Prostate gland (tissue), 2 donors: ENCODE measurements at regions of chr18 and their contacts with region 1.

Region 1: DNA sequence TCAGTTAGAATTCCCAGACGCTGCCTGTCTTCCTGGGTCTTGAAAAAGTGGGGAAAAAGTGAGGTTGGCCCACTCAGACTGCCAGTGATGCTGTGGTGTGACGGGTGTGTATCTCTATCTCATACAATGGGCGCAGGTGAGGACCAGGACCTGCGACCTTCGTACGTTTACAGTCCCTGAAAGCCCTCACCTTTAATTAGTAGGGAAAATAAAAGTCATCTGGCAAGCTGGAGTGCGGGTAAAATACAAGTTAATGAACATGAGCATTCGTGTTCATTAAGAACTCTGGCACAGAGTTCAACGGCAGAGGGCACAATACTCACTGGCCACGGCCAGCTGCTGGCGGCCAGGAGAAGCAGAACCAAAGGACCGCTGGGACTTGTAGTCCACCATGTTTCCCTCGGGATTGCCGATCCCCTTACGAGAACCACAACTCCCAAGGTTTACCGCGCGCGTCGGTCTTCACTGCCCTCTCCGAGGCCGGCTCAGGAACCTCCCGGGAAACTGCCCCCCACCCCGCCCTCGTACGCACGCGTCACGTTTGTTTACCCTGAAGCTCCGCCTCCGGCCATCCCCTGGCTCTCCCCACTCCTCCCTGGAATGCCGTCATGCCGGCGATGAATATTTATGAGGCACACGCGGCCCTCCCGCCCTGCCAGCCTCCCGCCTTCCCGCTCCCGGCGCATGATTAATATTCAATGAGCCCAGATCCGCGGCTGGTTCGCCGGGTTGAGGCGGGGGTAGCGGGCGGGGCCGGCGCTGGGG is 488 bp upstream of the PHLPP1 start:
- DNase-seq: peak; percentile 100
- H3K4me3 ChIP-seq: peak overlapping the region; percentile 70 to 71
- H3K27ac ChIP-seq: peak overlapping the region; percentile 97
- H3K4me1 ChIP-seq: no peaks in the 10 kb centered on the region
- H3K27me3 ChIP-seq: no peaks in the 10 kb centered on the region
- CTCF ChIP-seq: peak; percentile 46 to 94 (median 86)
- POLR2A ChIP-seq: no peak

Region 2: DNA sequence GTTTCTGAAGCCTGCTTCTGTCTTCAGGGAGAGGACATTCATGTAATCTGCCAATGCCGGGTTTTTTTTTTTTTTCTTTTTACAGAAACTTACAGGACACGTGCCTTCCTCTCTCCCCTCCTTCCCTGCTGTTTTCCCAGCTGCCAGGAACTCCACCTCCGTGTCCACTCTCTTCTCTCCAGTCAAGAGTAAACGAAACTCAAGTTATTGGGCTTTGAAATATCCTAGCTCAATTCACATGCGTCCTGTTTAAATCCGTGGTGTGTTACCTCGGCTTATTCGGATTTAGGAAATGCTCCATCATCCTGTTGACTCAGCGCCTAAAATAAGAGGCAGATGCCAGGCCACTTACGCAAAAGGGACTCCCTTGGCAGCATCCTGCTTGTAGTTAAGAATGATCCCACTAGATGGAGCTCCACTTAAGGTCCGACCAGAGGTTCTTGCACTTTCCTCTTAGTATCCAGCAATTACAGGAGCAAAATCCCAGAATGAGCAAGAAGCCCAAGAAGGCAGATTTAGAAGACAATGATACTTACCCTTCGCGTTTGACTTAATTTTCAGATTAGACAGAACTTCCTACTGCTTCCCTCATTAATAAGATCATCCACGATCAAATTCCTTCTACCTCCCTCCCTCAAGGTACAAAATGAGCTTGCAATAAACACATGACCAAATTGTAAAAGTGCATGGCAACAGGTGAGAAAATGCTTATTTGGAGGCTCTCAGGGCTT is 289.2 kb before region 1 on chr18:
- intact Hi-C with region 1: loop called (anchors 5 kb)
- DNase-seq: peak; percentile 93
- H3K4me3 ChIP-seq: peak overlapping the region; percentile 13 to 19
- H3K27ac ChIP-seq: peak overlapping the region; percentile 72 to 73
- H3K4me1 ChIP-seq: no peaks in the 10 kb centered on the region
- H3K27me3 ChIP-seq: no peaks in the 10 kb centered on the region
- CTCF ChIP-seq: peak; percentile 35 to 93 (median 85)
- POLR2A ChIP-seq: no peak

Region 3: GRCh38 chr18:62584241-62585120 is 130.4 kb before region 1 on chr18:
- intact Hi-C with region 1: loop called (anchors 5 kb)
- DNase-seq: peak; percentile 84
- H3K4me3 ChIP-seq: no peak overlapping the region
- H3K27ac ChIP-seq: no peak overlapping the region
- H3K4me1 ChIP-seq: no peaks in the 10 kb centered on the region
- H3K27me3 ChIP-seq: no peaks in the 10 kb centered on the region
- CTCF ChIP-seq: peak; percentile 87 to 99 (median 98)
- POLR2A ChIP-seq: no peak

Region 4: GRCh38 chr18:62759704-62760402 is 45.0 kb after region 1 on chr18:
- intact Hi-C with region 1: no loop called
- DNase-seq: no peak
- H3K4me3 ChIP-seq: no peak overlapping the region
- H3K27ac ChIP-seq: no peak overlapping the region
- H3K4me1 ChIP-seq: no peaks in the 10 kb centered on the region
- H3K27me3 ChIP-seq: no peaks in the 10 kb centered on the region
- CTCF ChIP-seq: no peak
- POLR2A ChIP-seq: no peak

Region 5: DNA sequence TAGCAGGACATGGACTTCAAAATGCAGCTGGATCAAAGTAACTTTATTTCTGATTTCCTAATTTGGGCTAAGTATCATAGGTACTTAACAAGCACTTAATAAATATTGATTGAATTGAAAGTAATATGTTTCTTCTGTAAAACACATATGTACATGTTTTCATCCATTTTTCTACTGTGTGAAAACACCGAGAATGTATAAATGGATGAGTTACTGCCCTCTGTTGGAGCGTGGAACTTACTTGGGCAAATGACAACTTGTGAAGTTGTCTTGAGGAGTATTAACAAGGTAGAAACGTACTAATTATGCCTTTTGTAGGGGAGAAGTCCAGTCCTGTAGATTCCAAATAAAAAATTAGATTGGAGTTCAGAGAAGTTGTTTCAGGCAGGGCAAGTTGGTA is 87.7 kb after region 1 on chr18:
- intact Hi-C with region 1: loop called (anchors 5 kb)
- DNase-seq: no peak
- H3K4me3 ChIP-seq: no peak overlapping the region
- H3K27ac ChIP-seq: no peak overlapping the region
- H3K4me1 ChIP-seq: no peaks in the 10 kb centered on the region
- H3K27me3 ChIP-seq: no peaks in the 10 kb centered on the region
- CTCF ChIP-seq: peak in 2 of 4 experiments; percentile 22 to 28
- POLR2A ChIP-seq: no peak

Region 6: GRCh38 chr18:62904396-62905285 is 189.8 kb after region 1 on chr18:
- intact Hi-C with region 1: no loop called
- DNase-seq: no peak
- H3K4me3 ChIP-seq: no peak overlapping the region
- H3K27ac ChIP-seq: no peak overlapping the region
- H3K4me1 ChIP-seq: no peaks in the 10 kb centered on the region
- H3K27me3 ChIP-seq: no peaks in the 10 kb centered on the region
- CTCF ChIP-seq: no peak
- POLR2A ChIP-seq: no peak

Region 7: GRCh38 chr18:62925031-62925688 is 210.3 kb after region 1 on chr18:
- intact Hi-C with region 1: no loop called
- DNase-seq: no peak
- H3K4me3 ChIP-seq: no peak overlapping the region
- H3K27ac ChIP-seq: no peak overlapping the region
- H3K4me1 ChIP-seq: no peaks in the 10 kb centered on the region
- H3K27me3 ChIP-seq: no peaks in the 10 kb centered on the region
- CTCF ChIP-seq: no peak
- POLR2A ChIP-seq: no peak

Region 8: DNA sequence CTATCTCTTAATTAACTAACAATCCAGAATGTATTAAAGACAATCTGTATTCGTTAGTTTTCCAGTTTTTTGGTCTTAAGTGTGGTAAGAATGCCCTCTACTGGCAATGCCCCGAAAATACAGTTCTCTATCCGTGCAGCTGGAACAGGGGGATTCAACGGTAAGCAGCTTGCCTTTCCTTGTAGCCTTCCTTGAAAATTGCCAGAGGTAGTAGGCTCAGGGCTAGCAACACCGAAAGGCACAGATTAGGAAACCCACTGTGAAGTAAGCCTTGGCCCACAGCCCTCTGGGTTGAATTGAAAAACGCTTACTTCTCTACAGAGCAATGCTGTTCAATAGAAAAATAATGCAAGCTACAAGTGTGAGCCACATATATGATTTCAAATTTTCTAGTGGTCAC is 724.5 kb after region 1 on chr18:
- intact Hi-C with region 1: loop called (anchors 10 kb)
- DNase-seq: peak; percentile 37
- H3K4me3 ChIP-seq: no peak overlapping the region
- H3K27ac ChIP-seq: no peak overlapping the region
- H3K4me1 ChIP-seq: no peaks in the 10 kb centered on the region
- H3K27me3 ChIP-seq: no peaks in the 10 kb centered on the region
- CTCF ChIP-seq: peak; percentile 45 to 77 (median 63)
- POLR2A ChIP-seq: no peak